A673 (cell line): ENCODE measurements at regions of chr2 and their contacts with region 1.

Region 1: GRCh38 chr2:24231461-24231881 is 56.6 kb downstream of the FAM228A start:
- DNase-seq: no peak
- H3K4me3 ChIP-seq: no peak overlapping the region
- H3K27ac ChIP-seq: no peak overlapping the region
- H3K4me1 ChIP-seq: no peaks in the 10 kb centered on the region
- H3K27me3 ChIP-seq: no peaks in the 10 kb centered on the region
- CTCF ChIP-seq: no peak

Region 2: DNA sequence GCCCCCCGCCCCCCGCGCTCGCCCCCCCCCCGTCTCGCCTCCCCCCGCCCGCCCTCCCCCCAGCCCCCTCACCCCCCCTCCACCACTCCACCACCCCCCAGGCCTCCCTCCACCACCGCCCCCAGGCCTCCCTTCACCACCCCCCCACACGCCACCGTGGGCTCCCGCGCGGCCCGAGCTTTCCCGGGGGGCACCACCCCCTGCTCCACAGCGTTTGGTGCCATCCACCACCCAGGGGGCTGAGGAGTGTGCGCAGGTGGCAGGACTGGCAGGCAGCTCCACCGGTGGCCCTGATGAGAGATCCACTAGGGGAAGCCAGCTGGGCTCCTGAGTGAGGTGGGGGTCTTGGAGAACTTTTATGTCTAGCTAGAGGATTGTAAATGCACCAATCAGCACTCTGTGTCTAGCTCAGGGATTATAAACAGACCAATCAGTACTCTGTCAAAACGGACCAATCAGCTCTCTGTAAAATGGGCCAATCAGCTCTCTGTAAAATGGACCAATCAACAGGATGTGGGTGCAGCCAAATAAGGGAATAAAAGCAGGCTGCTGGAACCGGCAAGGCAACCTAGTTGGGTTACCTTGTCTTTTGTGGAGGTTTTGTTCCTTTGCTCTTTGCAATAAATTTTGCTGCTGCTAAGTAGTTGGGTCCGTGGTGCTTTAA is 171.8 kb after region 1 on chr2:
- CTCF ChIA-PET with region 1: interaction called, 11 read pairs
- POLR2A ChIA-PET with region 1: no interaction called
- intact Hi-C with region 1: no loop called
- DNase-seq: no peak
- H3K4me3 ChIP-seq: no peak overlapping the region
- H3K27ac ChIP-seq: no peak overlapping the region
- H3K4me1 ChIP-seq: peaks cover 8% of the 10 kb centered on the region
- H3K27me3 ChIP-seq: no peaks in the 10 kb centered on the region
- CTCF ChIP-seq: no peak